H1 (cell line): ENCODE measurements at regions of chr3 and their contacts with region 1.

Region 1: DNA sequence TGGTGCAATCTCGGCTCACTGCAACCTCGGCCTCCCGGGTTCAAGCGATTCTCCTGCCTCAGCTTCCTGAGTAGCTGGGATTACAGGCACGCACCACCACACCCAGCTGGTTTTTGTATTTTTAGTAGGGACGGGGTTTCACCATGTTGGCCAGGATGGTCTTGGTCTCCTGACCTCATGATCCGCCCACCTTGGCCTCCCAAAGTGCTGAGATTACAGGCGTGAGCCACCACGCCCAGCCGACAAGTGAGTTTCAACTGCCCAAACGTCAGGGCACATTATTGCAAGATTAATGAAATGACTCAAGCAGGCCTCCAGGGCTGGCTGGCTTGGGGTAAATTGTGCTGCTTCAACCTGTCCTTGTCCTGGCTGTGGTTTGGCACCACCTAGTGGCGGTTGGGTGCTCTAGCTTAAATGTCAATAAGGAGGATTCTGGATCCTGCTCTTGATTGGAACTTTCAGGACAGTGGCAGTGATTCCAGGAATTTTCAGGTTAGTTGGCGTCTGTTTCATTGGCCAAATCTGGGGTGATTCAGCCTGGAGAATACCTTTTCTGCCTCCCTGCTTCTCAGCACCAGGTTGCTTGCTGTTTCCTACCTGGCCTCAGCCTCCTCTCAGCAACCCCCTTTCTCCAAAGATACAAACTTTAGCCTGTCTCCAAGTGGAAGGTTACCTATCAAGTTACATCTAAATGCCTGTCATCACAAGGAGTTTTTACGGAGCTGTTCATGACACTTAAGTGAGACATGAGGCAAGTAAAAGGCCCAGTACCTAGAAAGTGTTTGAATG is 32.4 kb upstream of the SACM1L start:
- DNase-seq: peak; percentile 79 to 88
- H3K4me3 ChIP-seq: no peak overlapping the region
- H3K27ac ChIP-seq: no peak overlapping the region
- H3K4me1 ChIP-seq: no peaks in the 10 kb centered on the region
- H3K27me3 ChIP-seq: no peaks in the 10 kb centered on the region
- CTCF ChIP-seq: peak; percentile 86 to 99 (median 96)
- EP300 ChIP-seq: no peak
- POLR2A ChIP-seq: no peak
- RAD21 ChIP-seq: peak; percentile 95 to 98

Region 2: DNA sequence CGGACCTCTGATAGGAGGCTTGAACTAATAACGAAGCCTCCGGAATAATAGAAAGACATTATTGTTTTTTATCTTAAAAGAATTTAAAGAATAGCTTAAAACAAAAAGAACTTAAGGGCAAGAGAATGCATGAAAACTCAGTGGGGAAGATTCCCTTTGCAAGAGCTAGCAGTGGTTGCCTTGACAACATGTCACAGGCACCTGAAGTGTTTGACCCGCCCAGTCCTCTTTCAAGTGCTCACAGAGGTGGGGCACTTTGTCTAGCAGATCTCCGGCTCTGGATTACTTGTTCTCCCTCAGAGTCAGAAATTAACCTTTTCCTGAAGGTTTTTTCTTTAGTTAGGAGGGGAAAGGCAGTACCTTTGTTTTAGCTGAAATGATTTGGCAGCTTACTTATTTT is 230.6 kb before region 1 on chr3:
- CTCF ChIA-PET with region 1: no interaction called
- POLR2A ChIA-PET with region 1: no interaction called
- DNase-seq: no peak
- H3K4me3 ChIP-seq: no peak overlapping the region; a peak in 1 of 8 replicates
- H3K27ac ChIP-seq: no peak overlapping the region
- H3K4me1 ChIP-seq: peaks cover 0 to 7% (median 3%) of the 10 kb centered on the region in 4 experiments; a peak in 3 of 7 replicates
- H3K27me3 ChIP-seq: no peaks in the 10 kb centered on the region
- CTCF ChIP-seq: no peak
- EP300 ChIP-seq: no peak
- POLR2A ChIP-seq: no peak
- RAD21 ChIP-seq: no peak

Region 3: GRCh38 chr3:45516829-45517228 is 139.9 kb before region 1 on chr3:
- CTCF ChIA-PET with region 1: interaction called, 65 read pairs
- POLR2A ChIA-PET with region 1: no interaction called
- DNase-seq: no peak
- H3K4me3 ChIP-seq: no peak overlapping the region
- H3K27ac ChIP-seq: no peak overlapping the region
- H3K4me1 ChIP-seq: no peaks in the 10 kb centered on the region
- H3K27me3 ChIP-seq: no peaks in the 10 kb centered on the region
- CTCF ChIP-seq: no peak
- EP300 ChIP-seq: no peak
- POLR2A ChIP-seq: no peak
- RAD21 ChIP-seq: no peak

Region 4: DNA sequence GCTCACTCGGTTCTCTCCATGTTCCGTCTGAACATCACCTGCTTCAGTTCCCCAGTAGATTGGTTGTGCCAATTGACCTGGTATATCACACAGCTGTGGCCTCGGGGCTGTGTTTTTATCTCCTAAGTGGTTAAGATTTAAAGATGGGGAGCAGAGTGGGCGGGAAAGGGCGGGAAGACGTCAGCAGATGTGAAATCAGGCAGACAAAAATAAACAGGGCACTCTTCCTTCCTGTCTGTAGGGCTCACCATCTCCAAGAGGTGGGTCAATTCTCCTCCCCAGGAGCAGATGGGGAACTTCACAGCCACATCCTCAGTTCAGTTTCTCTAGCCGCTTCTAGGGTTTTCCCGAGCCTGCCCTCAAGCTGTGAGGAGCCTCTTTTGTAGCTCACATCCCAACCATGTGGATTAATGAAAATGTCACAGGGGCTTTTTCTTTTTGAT is 89.0 kb before region 1 on chr3:
- CTCF ChIA-PET with region 1: interaction called, 10 read pairs
- POLR2A ChIA-PET with region 1: no interaction called
- DNase-seq: no peak
- H3K4me3 ChIP-seq: no peak overlapping the region
- H3K27ac ChIP-seq: no peak overlapping the region
- H3K4me1 ChIP-seq: peaks cover 3 to 19% (median 13%) of the 10 kb centered on the region in 4 experiments; a peak in 5 of 7 replicates
- H3K27me3 ChIP-seq: no peaks in the 10 kb centered on the region; a peak in 1 of 7 replicates
- CTCF ChIP-seq: no peak
- EP300 ChIP-seq: no peak
- POLR2A ChIP-seq: no peak
- RAD21 ChIP-seq: no peak

Region 5: GRCh38 chr3:45628746-45629145 is 28.0 kb before region 1 on chr3:
- CTCF ChIA-PET with region 1: interaction called, 13 read pairs
- POLR2A ChIA-PET with region 1: no interaction called
- DNase-seq: no peak
- H3K4me3 ChIP-seq: no peak overlapping the region
- H3K27ac ChIP-seq: no peak overlapping the region
- H3K4me1 ChIP-seq: no peaks in the 10 kb centered on the region
- H3K27me3 ChIP-seq: no peaks in the 10 kb centered on the region
- CTCF ChIP-seq: no peak
- EP300 ChIP-seq: no peak
- POLR2A ChIP-seq: no peak
- RAD21 ChIP-seq: no peak

Region 6: DNA sequence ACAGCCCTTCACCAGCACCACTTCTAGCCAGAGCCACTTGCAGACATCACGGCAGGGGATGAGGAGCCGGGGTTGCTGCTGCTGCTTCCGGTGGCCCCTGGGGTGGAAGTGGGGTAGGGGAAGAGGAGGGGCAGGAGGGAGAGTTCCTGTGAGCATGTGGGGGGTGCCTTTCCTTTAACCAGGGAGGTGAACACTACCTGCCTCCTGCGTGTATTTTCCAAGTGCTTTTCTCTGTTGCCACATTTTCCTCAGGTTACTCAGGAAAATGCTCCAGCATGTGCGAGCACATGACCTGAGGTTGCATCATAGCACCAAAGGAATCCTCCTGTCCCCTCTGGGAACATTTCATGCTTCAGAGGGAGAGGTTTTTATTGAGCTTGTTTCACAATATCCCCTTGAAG is 20.3 kb after region 1 on chr3:
- CTCF ChIA-PET with region 1: interaction called, 14 read pairs
- POLR2A ChIA-PET with region 1: interaction called, 5 read pairs
- DNase-seq: no peak
- H3K4me3 ChIP-seq: no peak overlapping the region
- H3K27ac ChIP-seq: no peak overlapping the region
- H3K4me1 ChIP-seq: peaks cover 8 to 19% (median 13%) of the 10 kb centered on the region in 4 experiments
- H3K27me3 ChIP-seq: no peaks in the 10 kb centered on the region
- CTCF ChIP-seq: no peak
- EP300 ChIP-seq: no peak
- POLR2A ChIP-seq: no peak
- RAD21 ChIP-seq: no peak